AG04449 (cell line): ENCODE measurements at regions of chr7 and their contacts with region 1.

Region 1: DNA sequence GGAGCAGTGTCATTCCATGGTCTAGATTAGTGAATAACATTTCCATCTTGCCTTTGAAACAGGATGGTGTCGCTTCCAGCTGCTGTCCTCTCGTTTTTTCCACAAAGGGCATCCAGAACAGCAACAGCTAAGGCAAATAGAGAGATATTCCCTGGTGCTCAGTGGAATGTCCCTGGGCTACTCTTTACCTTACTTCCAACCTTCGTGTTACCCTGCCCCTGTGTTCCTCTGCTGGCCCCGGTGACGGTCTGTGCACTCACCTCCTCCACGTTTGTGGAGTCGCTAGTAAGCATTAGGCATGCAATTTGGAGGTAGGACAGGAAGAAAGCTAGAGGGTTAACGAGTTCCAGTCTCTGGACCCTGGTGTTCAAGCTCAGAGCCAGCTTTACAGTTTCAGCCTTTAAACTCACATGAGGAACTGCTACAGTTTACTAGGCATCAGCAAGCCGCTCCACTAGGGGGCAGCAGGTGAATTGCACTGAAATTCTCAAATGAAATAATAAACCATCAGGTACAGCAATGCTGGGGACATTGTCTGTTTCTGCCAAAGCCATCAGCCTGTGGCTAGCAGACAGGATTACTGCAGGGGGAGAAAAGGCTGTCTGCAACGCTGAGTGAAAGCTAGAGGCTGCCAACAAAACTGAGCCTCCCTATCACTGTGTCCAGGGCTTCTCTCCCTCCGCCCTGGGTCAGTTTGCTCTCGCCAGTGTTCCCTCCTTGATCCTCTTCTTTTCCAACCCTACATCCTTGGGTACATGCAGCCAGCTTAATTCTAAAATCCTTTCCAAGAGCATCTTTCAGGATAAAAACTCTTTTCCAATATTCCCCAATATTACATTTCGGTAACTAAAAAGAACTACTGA is 9.0 kb downstream of the MRPL32 start:
- DNase-seq: peak; percentile 24
- H3K4me3 ChIP-seq: no peak overlapping the region
- CTCF ChIP-seq: peak; percentile 80

Region 2: DNA sequence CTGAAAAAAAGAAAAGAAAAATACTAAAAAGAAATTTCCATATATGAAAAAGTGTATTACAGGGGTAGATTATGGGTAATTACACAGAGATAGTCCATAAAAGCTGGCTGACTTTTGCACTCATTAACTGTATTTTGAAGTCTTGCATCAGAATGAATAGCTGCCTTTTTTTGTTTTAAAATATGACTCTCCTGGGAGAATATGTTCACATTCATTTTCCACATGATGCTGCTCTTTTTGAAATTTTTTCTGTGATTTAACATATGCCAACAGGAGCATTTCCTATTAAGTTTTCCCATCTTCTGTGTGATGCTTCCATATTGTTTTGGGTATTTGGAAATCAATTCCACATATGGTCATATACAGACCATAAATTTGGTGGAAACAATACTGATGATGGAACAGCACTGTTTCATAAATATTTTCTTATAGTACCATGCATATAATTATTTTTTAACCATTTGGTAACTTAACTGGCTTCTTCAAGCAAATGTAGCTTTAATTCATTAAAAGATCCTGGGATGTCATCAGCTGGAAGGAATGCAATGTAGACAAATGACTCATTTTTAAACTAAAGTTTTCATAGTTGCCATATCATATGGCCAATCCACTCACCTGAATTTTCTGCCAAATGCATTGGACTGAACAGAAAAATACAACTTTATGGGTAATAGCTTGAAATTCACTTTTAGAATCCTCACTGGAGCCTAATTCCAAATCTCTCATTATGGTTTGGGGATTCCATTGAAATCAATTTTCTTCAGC is 390.3 kb before region 1 on chr7:
- CTCF ChIA-PET with region 1: no interaction called
- POLR2A ChIA-PET with region 1: no interaction called
- DNase-seq: no peak
- H3K4me3 ChIP-seq: no peak overlapping the region
- CTCF ChIP-seq: no peak

Region 3: GRCh38 chr7:42964849-42965805 is 23.9 kb after region 1 on chr7:
- CTCF ChIA-PET with region 1: interaction called, 54 read pairs
- POLR2A ChIA-PET with region 1: no interaction called
- DNase-seq: no peak
- H3K4me3 ChIP-seq: no peak overlapping the region
- CTCF ChIP-seq: no peak

Region 4: GRCh38 chr7:43108255-43109011 is 167.2 kb after region 1 on chr7:
- CTCF ChIA-PET with region 1: interaction called, 14 read pairs
- POLR2A ChIA-PET with region 1: no interaction called
- DNase-seq: no peak
- H3K4me3 ChIP-seq: no peak overlapping the region
- CTCF ChIP-seq: peak; percentile 92

Region 5: DNA sequence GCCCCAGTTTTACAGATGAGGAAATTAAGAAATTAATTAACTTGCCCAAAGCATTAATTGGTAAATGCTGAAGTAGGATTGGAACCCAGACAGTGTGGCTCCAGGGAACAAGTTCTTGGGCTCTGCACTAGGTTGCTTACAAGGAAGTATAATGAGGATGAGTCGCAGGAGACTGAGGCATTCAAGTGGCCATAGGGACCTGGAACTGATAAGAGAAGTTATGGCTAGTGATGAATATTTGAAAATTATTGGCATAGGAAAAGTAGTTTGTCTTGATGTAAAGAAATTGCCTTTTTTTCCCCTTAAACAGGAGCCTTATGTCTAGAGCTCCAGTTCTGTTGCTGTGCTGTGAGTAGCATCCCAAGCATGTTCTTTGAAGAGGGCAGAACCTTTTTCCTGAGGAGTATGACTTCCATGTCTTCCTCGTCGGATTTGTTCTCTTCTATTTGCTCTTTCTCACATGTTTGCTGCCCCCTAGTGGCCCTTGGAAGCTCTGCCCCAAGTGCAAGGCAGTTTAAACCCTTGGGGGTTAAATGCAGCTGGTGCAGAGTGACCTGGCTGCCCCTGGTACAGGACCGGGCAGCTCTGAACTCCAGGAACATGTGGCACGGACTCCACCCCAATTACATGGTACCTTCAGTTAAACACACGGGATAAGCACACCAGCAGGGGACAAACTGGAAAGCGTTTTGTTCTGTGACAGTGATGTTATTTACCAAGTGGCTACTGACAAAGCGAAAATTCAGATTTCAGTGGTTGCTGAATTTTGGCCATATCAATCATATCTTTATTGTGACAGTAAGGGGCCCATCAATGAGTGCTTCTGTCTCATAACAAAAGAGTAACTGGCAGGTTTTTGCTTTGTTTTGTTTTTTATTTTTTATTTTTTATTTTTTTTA is 320.0 kb after region 1 on chr7:
- CTCF ChIA-PET with region 1: interaction called, 162 read pairs
- POLR2A ChIA-PET with region 1: no interaction called
- DNase-seq: peak; percentile 53
- H3K4me3 ChIP-seq: no peak overlapping the region
- CTCF ChIP-seq: peak; percentile 79